H1 (cell line): ENCODE measurements at regions of chr6 and their contacts with region 1.

Region 1: GRCh38 chr6:85490431-85491253 is 40.8 kb downstream of the NT5E start:
- DNase-seq: peak in 1 of 2 experiments; percentile 16
- H3K4me3 ChIP-seq: no peak overlapping the region
- H3K27ac ChIP-seq: no peak overlapping the region
- H3K4me1 ChIP-seq: no peaks in the 10 kb centered on the region
- H3K27me3 ChIP-seq: no peaks in the 10 kb centered on the region
- CTCF ChIP-seq: no peak
- EP300 ChIP-seq: no peak
- POLR2A ChIP-seq: no peak
- RAD21 ChIP-seq: no peak

Region 2: GRCh38 chr6:85354761-85355618 is 135.7 kb before region 1 on chr6:
- CTCF ChIA-PET with region 1: interaction called, 153 read pairs
- POLR2A ChIA-PET with region 1: no interaction called
- DNase-seq: peak; percentile 44 to 82
- H3K4me3 ChIP-seq: no peak overlapping the region
- H3K27ac ChIP-seq: no peak overlapping the region
- H3K4me1 ChIP-seq: no peaks in the 10 kb centered on the region
- H3K27me3 ChIP-seq: no peaks in the 10 kb centered on the region
- CTCF ChIP-seq: peak; percentile 86 to 92 (median 87)
- EP300 ChIP-seq: no peak
- POLR2A ChIP-seq: no peak
- RAD21 ChIP-seq: peak; percentile 91 to 93

Region 3: DNA sequence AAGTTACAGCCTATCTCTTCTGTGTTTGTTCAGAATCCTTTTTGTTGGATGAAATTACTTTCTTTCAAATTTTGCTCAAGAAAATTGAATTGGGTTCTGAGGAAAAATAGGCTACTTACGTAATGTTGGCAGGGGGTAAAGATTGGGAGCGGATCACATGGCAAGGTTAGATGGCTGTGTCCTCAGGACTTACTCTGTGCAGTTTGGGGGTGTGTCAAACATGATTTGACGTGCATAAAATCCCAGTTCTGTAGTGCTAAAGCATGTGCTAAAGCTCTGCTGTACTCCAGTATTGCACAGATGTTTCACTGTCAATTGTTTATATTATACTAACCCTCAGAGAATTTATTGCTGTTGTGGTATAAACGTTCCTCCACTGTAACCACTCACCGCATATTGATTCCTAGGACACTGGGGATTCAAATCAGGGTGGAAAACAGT is 38.2 kb before region 1 on chr6:
- CTCF ChIA-PET with region 1: no interaction called
- POLR2A ChIA-PET with region 1: no interaction called
- DNase-seq: no peak
- H3K4me3 ChIP-seq: no peak overlapping the region
- H3K27ac ChIP-seq: no peak overlapping the region
- H3K4me1 ChIP-seq: no peaks in the 10 kb centered on the region; a peak in 1 of 7 replicates
- H3K27me3 ChIP-seq: peaks cover 10 to 49% (median 40%) of the 10 kb centered on the region in 4 experiments
- CTCF ChIP-seq: no peak
- EP300 ChIP-seq: no peak
- POLR2A ChIP-seq: no peak
- RAD21 ChIP-seq: no peak

Region 4: DNA sequence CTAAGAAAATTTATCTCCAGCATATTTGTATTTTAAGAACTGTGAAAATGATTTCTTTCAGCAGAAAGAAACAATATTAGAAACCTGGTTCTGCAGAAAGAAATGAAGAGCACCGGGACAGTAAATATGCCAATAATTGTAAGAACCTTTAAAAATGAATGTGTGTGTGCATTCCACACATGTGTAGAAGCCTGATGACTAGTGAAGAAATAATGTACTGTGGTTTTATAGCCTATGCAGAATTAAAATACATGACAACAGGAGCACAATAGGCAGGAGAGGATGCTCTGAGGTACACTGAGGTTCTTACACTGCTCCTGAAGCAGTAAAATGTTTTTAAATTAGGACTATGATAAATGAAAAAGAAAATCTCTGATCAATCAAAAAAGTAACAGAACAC is 54.1 kb after region 1 on chr6:
- CTCF ChIA-PET with region 1: no interaction called
- POLR2A ChIA-PET with region 1: no interaction called
- DNase-seq: no peak
- H3K4me3 ChIP-seq: no peak overlapping the region
- H3K27ac ChIP-seq: no peak overlapping the region
- H3K4me1 ChIP-seq: no peaks in the 10 kb centered on the region
- H3K27me3 ChIP-seq: no peaks in the 10 kb centered on the region
- CTCF ChIP-seq: no peak
- EP300 ChIP-seq: no peak
- POLR2A ChIP-seq: no peak
- RAD21 ChIP-seq: no peak